Colonic mucosa (tissue), 4 donors: ENCODE measurements at regions of chr7 and their contacts with region 1.

Region 1: GRCh38 chr7:47581806-47582763 is at the start of gene TNS3:
- DNase-seq: no peak
- H3K4me3 ChIP-seq: peak within 1 kb of the TSS; percentile 67
- H3K27ac ChIP-seq: peak within 1 kb of the TSS; percentile 66
- H3K4me1 ChIP-seq: peaks cover 3% of the 10 kb centered on the region
- H3K27me3 ChIP-seq: no peaks in the 10 kb centered on the region
- CTCF ChIP-seq: no peak
- total RNA-seq, gene TNS3: 41.1 to 58.2 TPM

Region 2: DNA sequence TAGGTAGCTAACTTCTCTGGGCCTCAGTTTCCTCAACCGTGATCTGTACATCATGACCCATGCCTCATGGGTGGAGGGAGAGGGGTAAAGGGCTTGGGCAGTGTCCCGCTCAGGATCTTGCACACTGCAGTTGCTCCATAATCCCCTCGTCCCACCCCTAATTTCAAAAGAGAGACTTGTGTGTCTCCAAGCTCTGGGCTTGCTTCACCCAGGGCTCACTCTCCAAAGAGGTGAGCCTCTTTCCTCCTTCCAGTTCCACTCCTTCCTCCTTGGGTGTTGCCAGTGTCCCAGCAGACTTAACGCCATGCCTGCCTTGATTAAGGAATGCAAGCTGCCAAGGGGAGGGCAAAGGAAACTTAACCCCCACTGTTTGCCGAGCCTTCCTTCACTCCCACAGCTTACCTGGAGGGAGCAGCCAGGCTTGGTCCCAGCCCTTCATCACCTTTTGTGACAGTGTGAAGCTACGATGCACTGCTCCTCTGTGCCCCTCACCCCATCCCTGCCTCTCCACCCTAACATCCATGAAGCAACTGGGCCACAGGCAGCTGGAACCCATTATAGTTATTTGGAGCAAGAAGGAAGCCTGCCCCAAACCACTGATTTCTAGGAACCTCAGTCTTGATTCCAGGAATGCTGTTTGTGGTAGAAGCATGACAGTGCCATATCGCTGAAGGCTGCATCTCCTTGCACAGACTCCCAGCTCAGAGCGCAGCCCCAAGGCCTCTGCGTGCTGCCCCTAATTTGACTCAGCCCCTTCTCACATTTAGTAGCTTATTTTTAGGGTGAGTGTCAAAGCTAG is 363.5 kb before region 1 on chr7:
- intact Hi-C with region 1: no loop called
- DNase-seq: no peak
- H3K4me3 ChIP-seq: no peak overlapping the region
- H3K27ac ChIP-seq: no peak overlapping the region
- H3K4me1 ChIP-seq: no peaks in the 10 kb centered on the region
- H3K27me3 ChIP-seq: no peaks in the 10 kb centered on the region
- CTCF ChIP-seq: no peak

Region 3: DNA sequence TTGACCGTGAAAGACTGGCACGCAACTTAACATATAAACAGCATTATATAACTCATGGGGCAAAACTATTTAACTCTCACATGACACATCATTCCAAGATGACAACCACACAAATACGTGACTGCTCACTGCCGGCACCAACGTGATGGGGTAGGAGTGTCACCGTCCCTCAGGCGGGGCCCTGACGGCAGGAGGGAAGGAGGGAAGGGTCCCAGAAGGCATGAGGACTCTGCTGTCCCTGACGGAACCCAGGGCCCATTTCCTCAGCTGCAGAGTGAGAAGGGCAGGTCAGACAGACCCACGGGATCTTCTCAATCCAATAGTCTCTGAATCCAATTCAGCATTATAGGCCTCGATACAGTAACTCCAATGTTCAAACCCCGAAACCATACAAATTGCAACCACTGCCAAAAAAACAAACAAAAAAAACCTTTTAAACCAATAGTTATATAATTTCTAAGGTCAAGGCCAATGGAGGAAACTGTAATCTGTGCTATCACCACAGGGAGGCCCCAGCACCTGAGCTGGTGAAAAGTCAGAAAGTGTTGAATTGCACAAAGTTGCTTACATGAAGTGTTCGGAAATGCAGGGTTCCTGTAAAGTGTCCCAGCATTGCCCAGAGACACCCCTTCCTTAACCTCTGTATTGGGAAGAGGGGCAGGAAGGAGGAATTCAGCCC is 137.6 kb before region 1 on chr7:
- intact Hi-C with region 1: loop called (anchors 10 kb)
- DNase-seq: no peak
- H3K4me3 ChIP-seq: no peak overlapping the region
- H3K27ac ChIP-seq: no peak overlapping the region
- H3K4me1 ChIP-seq: peaks cover 4% of the 10 kb centered on the region
- H3K27me3 ChIP-seq: no peaks in the 10 kb centered on the region
- CTCF ChIP-seq: peak; percentile 54